ENCODE measurements at regions of chr4 and their contacts with region 1.

Region 1: DNA sequence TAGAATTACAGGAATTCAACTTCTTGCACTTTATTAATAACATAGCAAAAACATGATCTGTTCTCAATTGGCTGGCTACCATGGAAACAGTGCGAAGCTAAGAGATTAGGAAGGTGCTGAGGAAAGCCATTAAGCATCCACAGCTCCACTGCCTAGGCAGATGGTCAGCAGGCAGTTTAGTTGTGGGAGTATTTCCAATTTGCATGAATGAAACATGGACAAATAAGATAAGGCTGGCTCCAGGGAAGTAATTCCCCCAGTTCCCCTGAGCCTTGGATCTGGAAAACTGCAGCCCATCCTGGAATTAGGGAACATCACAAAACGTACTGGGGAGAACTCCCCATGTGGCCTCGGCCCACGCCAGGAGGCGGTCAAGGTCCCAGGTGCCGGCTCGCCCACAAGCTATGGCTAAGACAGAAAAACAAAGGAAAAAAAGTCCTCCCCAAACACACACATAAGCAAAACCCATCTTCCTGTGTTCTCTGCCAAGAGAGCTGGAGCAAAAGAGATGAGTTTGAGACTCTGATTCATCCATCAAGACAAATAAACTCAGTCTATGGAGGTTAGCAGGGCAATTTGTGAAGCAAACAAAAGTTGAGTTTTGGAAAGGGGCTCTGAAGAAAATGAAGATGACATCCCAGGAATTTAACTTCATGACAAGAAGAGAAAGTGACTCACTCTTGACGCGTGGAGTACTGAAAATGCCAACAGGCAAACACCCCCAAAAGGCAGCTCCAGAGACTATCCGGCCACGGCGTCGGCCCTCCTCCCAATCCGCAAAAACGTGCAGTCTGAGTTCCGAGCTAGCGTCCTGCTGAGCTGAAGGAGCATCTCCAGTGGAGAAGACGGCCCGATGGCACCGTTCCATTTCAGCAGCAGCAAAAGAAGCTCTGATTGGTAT is 45.1 kb downstream of the IGFBP7 start:
- DNase-seq: peak; percentile 78
- H3K4me3 ChIP-seq: no peak overlapping the region
- H3K27ac ChIP-seq: peak overlapping the region; percentile 53 to 62
- H3K4me1 ChIP-seq: peaks cover 45% of the 10 kb centered on the region
- H3K27me3 ChIP-seq: no peaks in the 10 kb centered on the region
- CTCF ChIP-seq: no peak
- POLR2A ChIP-seq: no peak

Region 2: GRCh38 chr4:57110640-57111511 is 45.8 kb after region 1 on chr4:
- intact Hi-C with region 1: loop called (anchors 10 kb)
- DNase-seq: peak; percentile 60
- H3K4me3 ChIP-seq: peak overlapping the region; percentile 82 to 85
- H3K27ac ChIP-seq: peak overlapping the region; percentile 82 to 96
- H3K4me1 ChIP-seq: no peaks in the 10 kb centered on the region
- H3K27me3 ChIP-seq: no peaks in the 10 kb centered on the region
- CTCF ChIP-seq: no peak
- POLR2A ChIP-seq: no peak

Measured in testis (tissue), 5 donors.